ENCODE measurements at regions of chr16 and their contacts with region 1.

Region 1: GRCh38 chr16:57609541-57610401 is 18.7 kb upstream of the ADGRG1 start:
- DNase-seq: peak; percentile 74
- H3K4me3 Mint-ChIP-seq: peak overlapping the region; percentile 69
- H3K27ac Mint-ChIP-seq: peak overlapping the region; percentile 99
- H3K4me1 Mint-ChIP-seq: peaks cover 68% of the 10 kb centered on the region
- H3K27me3 Mint-ChIP-seq: no peaks in the 10 kb centered on the region

Region 2: GRCh38 chr16:57628008-57628781 is 18.4 kb after region 1 on chr16 and contains the start of gene ADGRG1:
- intact Hi-C with region 1: loop called (anchors 1 kb)
- DNase-seq: peak; percentile 22
- H3K4me3 Mint-ChIP-seq: peak within 1 kb of the TSS; percentile 78
- H3K27ac Mint-ChIP-seq: peak within 1 kb of the TSS; percentile 29
- H3K4me1 Mint-ChIP-seq: peaks cover 20% of the 10 kb centered on the region
- H3K27me3 Mint-ChIP-seq: peaks cover 19% of the 10 kb centered on the region
- total RNA-seq, gene ADGRG1: 6.4 and 7.7 TPM in 2 replicates

Region 3: DNA sequence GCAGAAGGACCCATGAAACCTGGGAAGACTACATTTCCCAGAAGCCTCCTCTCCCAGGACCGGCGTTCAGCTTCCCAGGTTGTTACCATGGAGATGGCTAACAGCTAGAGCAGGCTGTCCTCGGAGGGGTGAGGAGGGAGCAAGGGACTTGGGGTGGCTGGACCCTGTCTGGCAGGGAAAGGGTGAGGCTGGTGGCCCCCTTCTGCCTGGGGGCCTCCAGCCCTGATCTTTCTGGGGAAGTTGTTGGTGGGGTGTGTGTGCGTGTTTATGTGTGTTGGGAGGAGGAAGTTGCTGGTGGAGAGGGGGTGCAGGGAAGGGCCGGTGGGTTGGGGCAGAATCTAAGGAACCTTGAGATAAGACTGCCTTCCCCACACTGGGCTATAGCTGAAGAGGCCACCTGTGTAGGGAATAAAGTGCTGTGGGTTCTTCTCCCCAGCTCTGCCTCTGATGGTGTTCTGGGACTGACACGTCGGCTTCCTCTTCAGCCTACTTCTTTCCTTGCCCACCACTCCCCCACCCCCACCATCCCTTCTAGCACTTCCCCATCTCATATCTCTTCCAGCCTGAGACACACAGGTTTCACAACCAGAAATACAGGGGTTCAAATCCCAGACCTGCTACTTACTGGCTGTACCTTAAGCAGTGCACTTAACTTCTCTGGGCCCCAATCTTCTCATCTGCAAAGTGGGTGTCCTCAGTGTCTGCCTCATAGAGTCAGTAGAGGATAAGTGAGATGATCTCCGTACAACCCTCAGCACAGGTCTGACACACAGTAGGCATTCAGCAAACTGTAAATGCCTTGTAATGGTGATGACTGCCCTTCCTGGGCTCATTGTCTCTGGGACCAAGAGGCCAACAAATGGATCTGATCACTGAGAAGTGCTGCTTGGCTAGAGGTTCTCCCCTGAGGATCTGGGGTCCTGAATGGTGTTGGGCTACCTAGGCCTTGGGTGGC is 85.2 kb after region 1 on chr16 and contains the start of gene DRC7:
- intact Hi-C with region 1: no loop called
- DNase-seq: peak; percentile 5
- H3K4me3 Mint-ChIP-seq: peak within 1 kb of the TSS; percentile 68
- H3K27ac Mint-ChIP-seq: peak within 1 kb of the TSS; percentile 63
- H3K4me1 Mint-ChIP-seq: peaks cover 21% of the 10 kb centered on the region
- H3K27me3 Mint-ChIP-seq: no peaks in the 10 kb centered on the region
- total RNA-seq, gene DRC7: not detected in 2 replicates